Mammary epithelial cell (primary cell): ENCODE measurements at regions of chr5 and their contacts with region 1.

Region 1: DNA sequence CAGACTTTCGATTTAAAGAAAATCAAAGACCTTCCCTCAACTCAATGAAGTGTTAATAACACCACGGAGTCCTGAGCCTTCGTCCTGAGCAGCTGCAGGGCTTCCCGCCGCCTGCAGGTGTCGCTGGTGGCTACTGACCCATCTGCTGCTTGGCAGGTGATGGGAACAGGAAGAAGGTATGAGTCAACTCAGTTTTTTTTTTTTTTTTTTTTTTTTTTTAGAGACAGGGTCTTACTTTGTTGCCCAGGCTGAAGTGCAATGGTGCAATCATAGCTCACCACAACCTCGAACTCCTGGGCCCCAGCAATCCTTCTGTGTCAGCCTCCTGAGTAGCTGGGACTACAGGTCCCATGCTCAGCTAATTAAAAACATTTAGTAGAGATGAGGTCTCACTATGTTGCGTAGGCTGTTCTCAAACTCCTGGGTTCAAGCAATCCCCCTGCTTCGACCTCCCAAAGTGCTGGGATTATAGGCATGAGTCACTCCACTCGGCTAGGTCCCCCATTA is 185.7 kb upstream of the IL12B start:
- DNase-seq: peak; percentile 54
- H3K4me3 ChIP-seq: no peak overlapping the region
- H3K27ac ChIP-seq: no peak overlapping the region
- H3K4me1 ChIP-seq: peaks cover 14% of the 10 kb centered on the region
- H3K27me3 ChIP-seq: no peaks in the 10 kb centered on the region
- CTCF ChIP-seq: peak; percentile 95 to 98

Region 2: GRCh38 chr5:158470764-158471534 is 1045.0 kb before region 1 on chr5:
- CTCF ChIA-PET with region 1: no interaction called
- dilution Hi-C with region 1: no loop called
- in situ Hi-C with region 1: no loop called
- intact Hi-C with region 1: no loop called
- DNase-seq: no peak
- H3K4me3 ChIP-seq: no peak overlapping the region
- H3K27ac ChIP-seq: no peak overlapping the region
- H3K4me1 ChIP-seq: peaks cover 4% of the 10 kb centered on the region
- H3K27me3 ChIP-seq: no peaks in the 10 kb centered on the region
- CTCF ChIP-seq: no peak

Region 3: GRCh38 chr5:159331093-159331973 is 184.6 kb before region 1 on chr5:
- CTCF ChIA-PET with region 1: no interaction called
- dilution Hi-C with region 1: no loop called
- in situ Hi-C with region 1: no loop called
- intact Hi-C with region 1: loop called (anchors 5 kb)
- DNase-seq: no peak
- H3K4me3 ChIP-seq: peak overlapping the region; percentile 37 to 56 (median 45)
- H3K27ac ChIP-seq: no peak overlapping the region
- H3K4me1 ChIP-seq: peaks cover 9% of the 10 kb centered on the region
- H3K27me3 ChIP-seq: no peaks in the 10 kb centered on the region
- CTCF ChIP-seq: peak; percentile 56 to 83

Region 4: GRCh38 chr5:159571495-159572238 is 55.7 kb after region 1 on chr5:
- CTCF ChIA-PET with region 1: no interaction called
- dilution Hi-C with region 1: loop called (anchors 5 kb)
- in situ Hi-C with region 1: no loop called
- intact Hi-C with region 1: no loop called
- DNase-seq: peak; percentile 14
- H3K4me3 ChIP-seq: no peak overlapping the region
- H3K27ac ChIP-seq: no peak overlapping the region
- H3K4me1 ChIP-seq: no peaks in the 10 kb centered on the region
- H3K27me3 ChIP-seq: no peaks in the 10 kb centered on the region
- CTCF ChIP-seq: no peak

Region 5: GRCh38 chr5:159682623-159683022 is 166.7 kb after region 1 on chr5:
- CTCF ChIA-PET with region 1: no interaction called
- dilution Hi-C with region 1: no loop called
- in situ Hi-C with region 1: no loop called
- intact Hi-C with region 1: loop called (anchors 5 kb)
- DNase-seq: no peak
- H3K4me3 ChIP-seq: no peak overlapping the region
- H3K27ac ChIP-seq: no peak overlapping the region
- H3K4me1 ChIP-seq: no peaks in the 10 kb centered on the region
- H3K27me3 ChIP-seq: no peaks in the 10 kb centered on the region
- CTCF ChIP-seq: no peak

Region 6: GRCh38 chr5:159782197-159782994 is 266.4 kb after region 1 on chr5:
- CTCF ChIA-PET with region 1: no interaction called
- dilution Hi-C with region 1: no loop called
- in situ Hi-C with region 1: no loop called
- intact Hi-C with region 1: no loop called
- DNase-seq: no peak
- H3K4me3 ChIP-seq: no peak overlapping the region
- H3K27ac ChIP-seq: no peak overlapping the region
- H3K4me1 ChIP-seq: peaks cover 14% of the 10 kb centered on the region
- H3K27me3 ChIP-seq: no peaks in the 10 kb centered on the region
- CTCF ChIP-seq: no peak

Region 7: DNA sequence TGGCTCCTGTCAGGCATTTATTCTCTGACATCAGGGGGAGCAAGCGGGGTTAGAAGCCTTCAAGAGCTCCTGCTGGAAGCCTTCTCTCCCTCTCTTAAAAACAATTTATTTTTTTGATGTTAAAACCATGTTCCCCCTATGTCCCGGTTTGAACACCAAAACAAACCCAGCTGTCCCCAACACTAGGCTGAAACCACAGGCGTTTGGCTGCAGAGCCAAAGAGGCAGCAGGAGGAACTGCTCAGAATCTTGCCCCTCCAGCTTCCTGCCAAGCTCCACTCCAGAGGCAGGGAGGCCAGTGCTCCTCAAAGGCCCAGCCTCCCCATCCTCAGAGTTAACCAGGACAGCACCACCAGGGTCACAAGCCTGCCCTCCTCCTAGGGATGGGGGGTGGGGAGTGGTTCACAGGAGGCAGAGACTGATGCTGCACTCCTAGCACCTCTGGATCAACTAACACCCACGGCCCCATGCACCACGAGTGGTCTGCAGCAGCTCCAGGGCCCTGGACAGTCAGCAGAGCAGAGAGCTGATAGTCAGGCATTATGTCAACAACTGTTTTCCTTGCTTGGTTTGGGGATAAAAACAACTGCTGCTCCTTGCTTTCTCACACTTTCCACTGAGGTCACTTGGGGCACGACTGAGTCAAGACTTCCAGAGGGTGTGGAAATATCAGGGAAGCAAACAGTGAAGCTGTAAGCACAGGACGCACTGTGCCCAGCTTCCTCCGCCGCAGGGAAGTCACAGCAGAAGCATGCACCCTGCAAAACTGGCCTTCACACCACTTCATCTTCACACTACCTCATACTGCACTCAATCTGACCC is 303.8 kb after region 1 on chr5:
- CTCF ChIA-PET with region 1: no interaction called
- dilution Hi-C with region 1: no loop called
- in situ Hi-C with region 1: no loop called
- intact Hi-C with region 1: loop called (anchors 10 kb)
- DNase-seq: peak; percentile 27
- H3K4me3 ChIP-seq: no peak overlapping the region
- H3K27ac ChIP-seq: no peak overlapping the region
- H3K4me1 ChIP-seq: peaks cover 30% of the 10 kb centered on the region
- H3K27me3 ChIP-seq: no peaks in the 10 kb centered on the region
- CTCF ChIP-seq: no peak

Region 8: DNA sequence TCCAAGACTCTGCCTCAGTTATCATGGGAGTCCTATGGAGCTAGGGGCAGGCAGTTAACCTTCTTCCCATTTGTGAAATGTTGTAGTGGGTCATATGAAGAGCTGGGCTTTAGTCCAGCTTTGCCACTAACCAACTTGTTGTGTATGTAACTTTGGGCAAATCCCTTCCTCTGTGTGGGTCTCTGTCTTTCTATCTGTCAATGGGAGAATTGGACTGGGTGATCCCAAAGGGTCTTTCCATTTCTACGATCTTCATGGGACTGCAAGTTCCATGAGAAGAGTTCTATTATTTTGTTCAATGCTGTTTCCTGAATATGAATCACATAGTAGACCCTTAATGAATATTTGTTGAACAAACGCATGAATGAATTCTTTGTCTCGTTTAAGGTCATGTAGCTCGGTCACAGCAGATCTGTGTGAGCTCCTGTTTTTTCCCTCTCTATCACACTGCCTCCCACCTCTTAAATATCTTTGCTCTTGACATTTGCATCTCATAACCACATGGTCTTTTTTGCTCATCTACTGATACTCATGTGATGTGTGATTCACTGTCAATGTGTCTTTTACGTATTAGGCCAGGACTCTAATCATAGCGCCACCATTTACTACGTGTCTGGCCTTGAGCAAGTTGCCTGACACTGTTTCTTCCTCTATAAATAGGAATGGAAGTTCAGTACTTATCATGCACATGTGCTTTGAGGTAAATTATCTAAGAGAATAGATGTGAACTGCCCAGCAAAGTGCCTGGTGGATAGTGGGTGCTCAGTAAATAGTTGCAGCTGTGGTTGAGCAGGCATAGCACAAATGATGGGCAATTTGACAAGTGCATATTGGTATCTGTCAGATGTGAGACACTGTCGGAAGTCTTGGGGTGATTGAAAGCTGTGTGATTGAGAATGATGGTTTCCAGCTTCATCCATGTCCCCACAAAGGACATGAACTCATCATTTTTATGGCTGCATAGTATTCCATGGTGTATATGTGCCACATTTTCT is 943.1 kb after region 1 on chr5:
- CTCF ChIA-PET with region 1: no interaction called
- dilution Hi-C with region 1: no loop called
- in situ Hi-C with region 1: no loop called
- intact Hi-C with region 1: no loop called
- DNase-seq: no peak
- H3K4me3 ChIP-seq: no peak overlapping the region
- H3K27ac ChIP-seq: no peak overlapping the region
- H3K4me1 ChIP-seq: peaks cover 9% of the 10 kb centered on the region
- H3K27me3 ChIP-seq: no peaks in the 10 kb centered on the region
- CTCF ChIP-seq: no peak